OCI-LY7 (cell line): ENCODE measurements at regions of chr2 and their contacts with region 1.

Region 1: DNA sequence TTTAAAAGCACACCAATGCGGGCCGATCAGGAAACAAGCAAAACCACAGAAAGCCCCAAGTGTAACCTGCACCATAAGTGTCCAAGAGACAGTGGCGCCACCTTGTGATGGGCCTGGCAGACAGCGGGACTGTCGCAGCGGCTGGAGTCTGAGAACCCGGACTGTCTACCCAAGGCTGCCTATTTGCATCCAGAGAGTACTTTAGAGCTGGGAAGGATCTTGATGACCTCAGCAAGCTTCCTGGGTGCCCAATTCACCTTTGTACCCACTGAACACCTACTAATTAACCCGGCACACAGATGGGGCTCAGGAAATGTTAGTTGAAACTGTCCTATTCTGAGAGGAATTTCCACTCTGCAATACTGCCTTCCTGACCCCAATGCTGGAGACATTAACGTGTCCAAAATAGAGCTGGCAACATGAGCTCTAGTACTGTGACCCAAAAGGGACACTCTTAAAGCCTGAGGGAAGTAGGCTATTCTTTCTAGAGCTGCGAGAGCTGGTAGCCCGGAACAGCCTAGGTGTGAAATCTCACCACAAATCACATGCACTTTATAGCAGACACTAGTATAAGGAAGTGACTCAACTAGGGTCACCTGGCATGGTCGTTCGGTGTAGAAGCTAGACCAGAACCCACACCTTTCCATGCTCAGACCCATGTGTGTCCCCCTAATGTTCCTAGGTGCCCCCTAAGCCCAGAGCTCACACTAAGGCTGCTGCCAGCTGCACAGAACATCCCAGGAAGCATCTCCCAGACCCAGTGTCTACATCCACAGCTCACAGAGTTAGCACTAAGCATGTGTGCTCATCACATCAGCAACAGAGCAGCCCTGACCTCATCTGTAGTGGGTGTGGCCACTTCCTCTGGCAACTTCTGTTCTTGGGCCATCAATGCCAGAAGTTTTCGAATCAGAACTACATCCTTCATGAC is 25.4 kb downstream of the POLR1A start:
- DNase-seq: peak; percentile 78
- H3K4me3 ChIP-seq: no peak overlapping the region
- H3K27ac ChIP-seq: no peak overlapping the region
- H3K4me1 ChIP-seq: peaks cover 8% of the 10 kb centered on the region
- CTCF ChIP-seq: peak; percentile 89

Region 2: DNA sequence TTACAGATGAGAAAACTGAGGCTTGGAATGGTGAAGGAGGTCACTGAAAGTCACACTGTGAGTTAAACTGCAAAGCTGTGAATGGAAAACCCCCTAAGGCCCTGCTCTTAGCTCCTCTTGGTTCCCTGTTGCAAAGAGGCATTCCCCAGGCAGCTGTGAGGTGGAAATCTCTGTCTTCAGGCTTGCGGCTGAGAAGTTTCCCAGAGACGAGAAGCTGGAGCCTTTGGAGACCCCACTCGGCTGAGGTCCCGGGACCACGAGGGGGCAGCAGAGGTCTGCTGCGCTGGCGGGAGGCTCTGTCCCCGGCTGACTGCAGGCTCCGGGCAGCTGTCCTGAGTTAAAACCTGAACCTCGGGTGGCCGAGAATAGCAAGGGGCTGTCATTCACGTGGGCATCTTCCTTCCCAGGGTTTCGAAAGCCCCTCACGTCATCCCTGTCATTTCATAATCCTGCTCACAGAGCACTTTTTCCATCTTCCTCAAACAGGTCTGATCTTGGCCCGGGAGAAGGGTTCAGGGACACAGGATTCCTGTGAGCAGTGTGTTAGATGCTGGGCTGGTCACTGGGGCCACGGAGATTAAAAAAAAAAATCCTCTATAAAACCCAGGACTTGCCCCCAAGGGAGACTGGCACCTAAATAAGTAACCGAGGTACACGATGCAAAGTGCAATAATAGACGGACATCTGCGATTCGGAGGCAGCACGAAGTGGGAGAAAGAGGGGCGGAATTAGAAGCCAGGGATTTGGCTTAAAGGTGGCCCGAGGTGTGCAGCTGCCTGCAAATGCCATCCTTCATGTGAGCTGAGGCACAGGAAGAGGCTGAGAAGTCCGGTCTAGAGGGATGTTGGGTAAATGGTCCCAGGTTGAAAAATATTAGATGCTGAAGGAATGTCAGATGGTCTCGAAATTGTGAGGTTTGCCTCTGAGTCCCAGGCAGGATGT is 351.1 kb before region 1 on chr2:
- CTCF ChIA-PET with region 1: no interaction called
- POLR2A ChIA-PET with region 1: no interaction called
- intact Hi-C with region 1: loop called (anchors 5 kb)
- DNase-seq: peak; percentile 73
- H3K4me3 ChIP-seq: no peak overlapping the region
- H3K27ac ChIP-seq: no peak overlapping the region
- H3K4me1 ChIP-seq: no peaks in the 10 kb centered on the region
- CTCF ChIP-seq: peak; percentile 92

Region 3: GRCh38 chr2:85826990-85827878 is 253.0 kb before region 1 on chr2:
- CTCF ChIA-PET with region 1: interaction called, 5 read pairs
- POLR2A ChIA-PET with region 1: interaction called, 3 read pairs
- intact Hi-C with region 1: loop called (anchors 1 kb)
- DNase-seq: peak; percentile 76
- H3K4me3 ChIP-seq: no peak overlapping the region
- H3K27ac ChIP-seq: no peak overlapping the region
- H3K4me1 ChIP-seq: no peaks in the 10 kb centered on the region
- CTCF ChIP-seq: peak; percentile 86

Region 4: GRCh38 chr2:85888684-85889626 is 191.3 kb before region 1 on chr2 and contains the start of gene ST3GAL5:
- CTCF ChIA-PET with region 1: interaction called, 5 read pairs
- POLR2A ChIA-PET with region 1: no interaction called
- intact Hi-C with region 1: loop called (anchors 2 kb)
- DNase-seq: peak; percentile 93
- H3K4me3 ChIP-seq: peak within 1 kb of the TSS; percentile 87
- H3K27ac ChIP-seq: peak within 1 kb of the TSS; percentile 14
- H3K4me1 ChIP-seq: peaks cover 22% of the 10 kb centered on the region
- CTCF ChIP-seq: peak; percentile 92
- total RNA-seq, gene ST3GAL5: 6.1 and 7.4 TPM in 2 replicates

Region 5: DNA sequence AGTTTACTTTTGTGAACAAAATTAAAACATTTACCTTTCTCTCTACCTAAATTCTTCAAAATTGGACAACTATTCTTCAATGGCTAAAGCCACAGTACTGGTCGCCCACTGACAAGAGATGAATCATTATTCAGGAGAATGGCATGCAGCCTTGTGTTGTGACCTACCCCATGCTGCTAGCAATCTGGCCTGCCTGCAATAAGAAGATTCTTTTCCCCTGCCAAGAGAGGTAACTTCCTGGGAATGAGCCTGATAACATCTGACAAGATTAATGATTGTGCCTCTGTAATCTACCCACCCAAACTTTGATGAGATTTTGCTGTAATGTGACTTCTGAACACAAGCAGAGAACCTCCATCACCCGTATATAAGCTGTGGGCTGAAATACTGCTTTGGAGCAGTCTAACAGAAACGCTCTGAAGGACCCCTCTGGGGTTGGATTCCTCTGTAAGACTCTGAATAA is 144.5 kb before region 1 on chr2:
- CTCF ChIA-PET with region 1: no interaction called
- POLR2A ChIA-PET with region 1: no interaction called
- intact Hi-C with region 1: no loop called
- DNase-seq: no peak
- H3K4me3 ChIP-seq: no peak overlapping the region
- H3K27ac ChIP-seq: no peak overlapping the region
- H3K4me1 ChIP-seq: no peaks in the 10 kb centered on the region
- CTCF ChIP-seq: no peak

Region 6: DNA sequence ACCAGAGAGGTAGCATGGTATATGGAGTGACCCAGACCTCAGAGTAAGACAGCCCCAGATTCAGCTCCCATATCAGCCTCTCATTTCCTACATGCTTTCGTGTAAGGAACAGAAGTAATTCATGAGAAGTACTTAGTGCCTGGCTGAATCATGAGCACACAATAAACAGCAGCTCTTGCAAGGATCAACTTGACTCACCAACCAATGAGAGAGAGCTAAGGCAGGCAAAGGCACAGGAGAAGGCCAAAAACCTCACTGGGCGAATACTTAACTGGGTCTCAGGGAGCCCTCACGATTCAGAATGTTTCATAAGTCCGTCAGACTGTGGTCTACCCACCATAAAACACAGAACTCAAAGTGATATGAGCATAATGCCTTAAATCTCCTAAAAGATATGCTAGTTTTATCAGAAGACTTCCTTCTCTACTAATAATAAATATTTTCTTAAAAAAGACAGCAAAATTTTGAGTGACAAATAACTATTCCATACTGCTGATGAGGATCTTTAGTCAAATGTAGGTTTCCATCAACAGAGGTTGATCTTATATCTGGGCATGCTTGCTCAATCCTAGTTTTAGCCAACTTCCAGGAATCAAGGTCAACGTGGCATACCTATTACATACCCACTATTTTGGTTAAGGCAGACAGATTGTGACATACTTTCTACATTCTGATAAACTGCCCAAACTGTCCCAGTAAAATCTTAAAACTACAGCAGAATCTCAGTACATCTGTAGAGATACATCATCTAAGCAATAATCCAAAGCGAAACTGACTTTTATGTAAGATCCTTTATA is 80.1 kb after region 1 on chr2:
- CTCF ChIA-PET with region 1: no interaction called
- POLR2A ChIA-PET with region 1: no interaction called
- intact Hi-C with region 1: no loop called
- DNase-seq: no peak
- H3K4me3 ChIP-seq: no peak overlapping the region
- H3K27ac ChIP-seq: no peak overlapping the region
- H3K4me1 ChIP-seq: no peaks in the 10 kb centered on the region
- CTCF ChIP-seq: no peak